Stomach (tissue), 19 donors: ENCODE measurements at regions of chr4 and their contacts with region 1.

Region 1: DNA sequence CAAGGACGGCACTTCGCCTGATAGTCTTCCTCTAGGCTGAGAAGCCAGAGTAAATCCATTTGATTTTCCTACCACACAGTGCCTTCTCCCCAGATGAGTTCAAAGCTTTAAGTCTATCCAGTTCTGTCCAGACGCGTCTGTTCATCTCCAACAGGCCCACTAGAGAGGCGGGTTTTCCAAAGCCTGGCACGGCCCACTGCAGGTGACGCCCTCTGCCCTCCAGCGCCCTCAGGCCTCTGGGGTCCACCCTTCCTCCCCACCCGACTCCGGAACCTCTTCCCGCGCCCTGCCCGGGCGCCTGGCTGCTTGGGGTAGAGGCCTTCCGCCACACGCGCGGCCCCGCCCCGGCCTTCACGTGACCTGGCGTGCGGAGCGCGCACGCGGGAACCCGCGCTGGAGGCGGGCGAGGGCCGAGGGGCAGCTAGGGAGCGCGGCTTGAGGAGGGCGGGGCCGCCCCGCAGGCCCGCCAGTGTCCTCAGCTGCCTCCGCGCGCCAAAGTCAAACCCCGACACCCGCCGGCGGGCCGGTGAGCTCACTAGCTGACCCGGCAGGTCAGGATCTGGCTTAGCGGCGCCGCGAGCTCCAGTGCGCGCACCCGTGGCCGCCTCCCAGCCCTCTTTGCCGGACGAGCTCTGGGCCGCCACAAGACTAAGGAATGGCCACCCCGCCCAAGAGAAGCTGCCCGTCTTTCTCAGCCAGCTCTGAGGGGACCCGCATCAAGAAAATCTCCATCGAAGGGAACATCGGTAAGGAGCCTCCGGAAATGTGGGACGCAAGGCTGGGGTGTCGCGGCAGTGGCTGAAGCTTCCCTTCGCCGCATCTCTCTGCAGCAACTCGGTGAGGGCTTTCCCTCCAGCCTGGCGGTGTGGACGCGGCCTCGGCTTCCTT is at the start of gene DCK:
- DNase-seq: peak; percentile 93 to 97
- H3K4me3 ChIP-seq: peak within 1 kb of the TSS; percentile 81 to 92 (median 86)
- H3K27ac ChIP-seq: peak within 1 kb of the TSS; percentile 84 to 92 (median 90)
- H3K4me1 ChIP-seq: peaks cover 11 to 53% (median 34%) of the 10 kb centered on the region in 4 donors
- H3K27me3 ChIP-seq: no peaks in the 10 kb centered on the region
- CTCF ChIP-seq: no peak
- EP300 ChIP-seq: no peak
- POLR2A ChIP-seq: peak in 2 of 4 donors; percentile 32 to 75
- total RNA-seq, gene DCK: 11.9 to 43.2 (median 16.1) TPM

Region 2: DNA sequence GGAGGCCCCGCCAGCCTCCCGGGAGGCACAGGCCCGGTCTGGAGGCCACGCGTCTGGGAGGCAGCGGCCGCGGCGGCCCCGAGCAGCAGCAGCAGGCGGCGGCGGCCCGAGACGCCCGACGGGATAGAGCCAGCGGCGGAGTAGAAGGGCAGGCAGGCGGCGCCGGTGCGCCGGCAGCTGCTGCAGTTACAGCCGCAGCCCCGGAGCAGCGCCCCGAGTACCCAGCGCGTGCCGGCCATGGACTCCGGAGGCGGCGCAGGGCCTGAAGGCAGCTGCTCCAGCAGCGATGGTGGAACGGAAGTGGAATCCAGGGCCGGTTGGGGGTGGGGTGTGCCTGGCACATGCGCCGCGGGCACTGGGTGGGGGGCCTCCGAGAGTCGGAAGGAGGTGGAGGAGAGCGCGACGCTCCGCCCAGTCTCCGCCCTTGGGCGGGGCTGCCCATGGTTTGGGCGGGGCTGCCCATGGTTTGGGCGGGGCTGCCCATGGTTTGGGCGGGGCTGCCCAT is 153.8 kb before region 1 on chr4 and contains the start of gene GRSF1:
- intact Hi-C with region 1: loop called (anchors 10 kb)
- DNase-seq: peak; percentile 94 to 97
- H3K4me3 ChIP-seq: peak within 1 kb of the TSS; percentile 78 to 94 (median 89)
- H3K27ac ChIP-seq: peak within 1 kb of the TSS; percentile 95 to 99 (median 97)
- H3K4me1 ChIP-seq: peaks cover 4 to 47% (median 24%) of the 10 kb centered on the region in 4 donors
- H3K27me3 ChIP-seq: no peaks in the 10 kb centered on the region
- CTCF ChIP-seq: no peak
- EP300 ChIP-seq: no peak
- POLR2A ChIP-seq: peak in 1 of 4 donors; percentile 67
- total RNA-seq, gene GRSF1: 24.0 to 86.5 (median 60.0) TPM

Region 3: DNA sequence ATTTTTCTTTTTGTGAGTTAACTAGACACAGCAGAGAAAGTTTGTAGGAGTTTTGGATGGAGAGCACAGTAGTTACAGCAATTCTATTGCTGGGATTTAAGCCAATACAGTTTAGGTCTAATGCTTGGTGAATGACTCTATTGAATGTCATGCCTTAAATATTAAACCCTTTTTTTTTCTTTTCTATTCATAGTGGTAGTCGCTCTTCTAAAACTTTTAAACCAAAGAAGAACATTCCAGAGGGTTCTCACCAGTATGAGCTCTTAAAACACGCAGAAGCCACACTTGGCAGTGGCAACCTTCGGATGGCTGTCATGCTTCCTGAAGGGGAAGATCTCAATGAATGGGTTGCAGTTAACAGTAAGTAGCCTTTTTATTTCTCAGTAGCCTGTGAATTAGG is 34.7 kb before region 1 on chr4:
- intact Hi-C with region 1: no loop called
- DNase-seq: no peak
- H3K4me3 ChIP-seq: no peak overlapping the region
- H3K27ac ChIP-seq: no peak overlapping the region
- H3K4me1 ChIP-seq: no peaks in the 10 kb centered on the region
- H3K27me3 ChIP-seq: no peaks in the 10 kb centered on the region
- CTCF ChIP-seq: no peak
- EP300 ChIP-seq: no peak
- POLR2A ChIP-seq: no peak